T-cell (primary cell): ENCODE measurements at regions of chr2 and their contacts with region 1.

Region 1: DNA sequence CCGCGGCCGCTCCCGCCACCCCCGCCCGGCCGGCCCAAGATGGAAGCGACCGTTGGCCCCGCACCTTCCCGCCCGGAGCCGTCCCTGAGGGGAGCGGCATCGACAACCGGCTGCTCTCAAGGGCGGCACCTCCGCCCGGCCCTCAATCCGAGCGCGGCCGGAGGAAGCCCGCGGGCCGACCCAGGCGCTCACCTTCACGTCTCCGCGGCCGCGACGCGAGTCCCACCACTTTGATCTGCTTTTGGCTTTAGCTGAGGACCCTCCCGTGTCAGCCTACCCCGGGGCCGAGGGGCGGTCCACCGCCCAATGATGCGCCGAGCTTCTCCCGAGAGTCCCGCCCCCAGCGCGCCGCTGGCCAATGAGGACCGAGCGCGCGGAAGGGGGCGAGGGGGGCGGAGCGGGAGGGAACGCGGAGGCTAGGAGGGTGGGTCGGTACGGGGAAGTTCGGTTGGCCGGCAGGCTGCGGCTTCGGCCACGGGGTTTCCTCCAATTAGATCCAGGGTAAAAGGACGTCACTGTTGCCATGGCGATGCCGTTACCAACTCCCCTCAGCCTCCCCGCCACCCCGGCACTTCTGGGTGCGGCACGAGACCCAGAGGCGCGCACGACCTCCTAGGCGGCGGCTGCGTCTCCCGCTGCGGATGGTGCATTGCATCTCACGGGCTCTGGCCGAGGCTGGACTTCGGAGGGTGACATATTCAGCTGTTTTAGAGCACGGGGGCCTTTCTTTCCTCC is at the start of gene YWHAQ:
- DNase-seq: peak; percentile 90 to 99 (median 95)
- ATAC-seq: peak; percentile 88 to 92 (median 89)
- H3K4me3 ChIP-seq: peak within 1 kb of the TSS; percentile 84 to 87
- H3K4me3 Mint-ChIP-seq: peak within 1 kb of the TSS; percentile 91 to 95 (median 92)
- H3K27ac ChIP-seq: peak within 1 kb of the TSS; percentile 82
- H3K27ac Mint-ChIP-seq: peak within 1 kb of the TSS; percentile 88 to 91
- H3K4me1 ChIP-seq: peaks cover 12 to 29% of the 10 kb centered on the region in 2 experiments
- H3K4me1 Mint-ChIP-seq: peaks cover 53 to 54% (median 53%) of the 10 kb centered on the region in 3 donors
- H3K27me3 ChIP-seq: no peaks in the 10 kb centered on the region
- H3K27me3 Mint-ChIP-seq: no peaks in the 10 kb centered on the region
- total RNA-seq, gene YWHAQ: 104 to 141 (median 139) TPM

Region 2: DNA sequence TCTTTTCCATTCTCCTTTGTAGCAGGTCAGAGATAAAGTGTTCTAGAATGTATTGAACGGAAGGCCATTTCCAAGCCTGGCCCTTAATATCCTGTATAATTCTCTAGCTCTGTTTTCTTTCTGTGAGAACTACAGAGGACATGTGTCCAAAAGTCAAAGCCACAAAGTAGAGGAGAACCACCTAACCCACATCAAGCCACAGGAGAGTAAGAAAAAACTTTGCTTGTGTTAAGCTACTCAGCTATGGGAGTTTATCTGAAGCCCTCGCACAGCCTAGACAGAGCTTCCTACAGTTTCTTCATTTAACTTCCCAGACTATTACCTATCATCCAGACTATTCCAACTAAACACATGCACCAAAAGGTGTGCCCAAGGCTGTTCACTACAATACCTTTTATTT is 97.3 kb before region 1 on chr2:
- CTCF ChIA-PET with region 1: no interaction called
- POLR2A ChIA-PET with region 1: interaction called in 1 of 2 experiments, 20 read pairs
- DNase-seq: no peak
- ATAC-seq: no peak
- H3K4me3 ChIP-seq: no peak overlapping the region
- H3K4me3 Mint-ChIP-seq: no peak overlapping the region
- H3K27ac ChIP-seq: no peak overlapping the region
- H3K27ac Mint-ChIP-seq: no peak overlapping the region
- H3K4me1 ChIP-seq: no peaks in the 10 kb centered on the region
- H3K4me1 Mint-ChIP-seq: peaks cover 0 to 20% (median 17%) of the 10 kb centered on the region in 3 donors
- H3K27me3 ChIP-seq: no peaks in the 10 kb centered on the region
- H3K27me3 Mint-ChIP-seq: no peaks in the 10 kb centered on the region

Region 3: DNA sequence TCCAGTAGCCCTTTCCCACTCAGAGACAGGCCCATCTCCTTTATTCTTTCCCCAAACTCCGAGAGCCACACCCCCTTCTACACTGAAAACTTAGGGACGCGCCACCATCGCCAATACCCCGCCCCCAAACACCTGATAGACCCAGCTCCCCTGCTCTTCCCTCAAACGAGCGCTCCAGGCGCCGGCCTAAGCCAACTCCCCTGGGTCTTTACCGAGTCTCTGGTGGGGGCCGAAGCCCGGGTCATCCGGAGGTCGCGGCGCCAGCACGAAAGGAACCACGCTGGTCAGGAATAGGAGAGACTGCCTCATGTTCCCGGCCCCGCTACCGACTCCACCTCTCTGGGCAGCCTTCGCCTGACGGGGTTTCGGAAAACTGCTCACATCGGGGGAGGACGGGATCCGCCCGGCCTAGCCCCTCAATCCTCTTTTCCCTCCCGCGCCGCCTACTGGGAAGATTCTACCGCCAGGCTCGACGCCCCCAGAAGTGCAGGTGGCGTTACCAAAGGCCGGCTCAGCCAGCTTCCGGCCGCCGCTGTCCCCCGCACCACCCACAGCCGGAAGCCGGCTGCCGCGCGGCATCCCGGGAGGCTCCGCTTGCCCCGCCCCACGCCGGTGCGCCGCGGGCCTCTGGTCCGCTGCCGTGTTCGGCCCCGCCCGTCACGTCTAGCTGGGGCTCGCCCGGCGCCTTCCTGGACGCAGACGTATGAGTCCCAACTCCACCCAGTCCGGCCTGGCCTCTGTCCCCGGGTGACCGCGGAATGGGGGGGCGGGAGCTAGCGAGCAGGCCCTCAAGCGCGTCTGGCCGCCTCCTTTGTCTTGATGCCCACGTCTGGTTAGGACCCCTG is 75.4 kb before region 1 on chr2 and contains the start of gene ADAM17:
- CTCF ChIA-PET with region 1: interaction called in 1 of 2 experiments, 6 read pairs
- POLR2A ChIA-PET with region 1: interaction called in 1 of 2 experiments, 17 read pairs
- DNase-seq: peak; percentile 56 to 91 (median 74)
- ATAC-seq: peak; percentile 94 to 97 (median 96)
- H3K4me3 ChIP-seq: peak within 1 kb of the TSS; percentile 95 to 99
- H3K4me3 Mint-ChIP-seq: peak within 1 kb of the TSS; percentile 95 to 97 (median 95)
- H3K27ac ChIP-seq: peak within 1 kb of the TSS; percentile 94
- H3K27ac Mint-ChIP-seq: peak within 1 kb of the TSS; percentile 93 to 94
- H3K4me1 ChIP-seq: peaks cover 20 to 33% of the 10 kb centered on the region in 2 experiments
- H3K4me1 Mint-ChIP-seq: peaks cover 52 to 60% (median 53%) of the 10 kb centered on the region in 3 donors
- H3K27me3 ChIP-seq: no peaks in the 10 kb centered on the region
- H3K27me3 Mint-ChIP-seq: no peaks in the 10 kb centered on the region
- total RNA-seq, gene ADAM17: 26.5 to 34.5 (median 29.5) TPM

Region 4: DNA sequence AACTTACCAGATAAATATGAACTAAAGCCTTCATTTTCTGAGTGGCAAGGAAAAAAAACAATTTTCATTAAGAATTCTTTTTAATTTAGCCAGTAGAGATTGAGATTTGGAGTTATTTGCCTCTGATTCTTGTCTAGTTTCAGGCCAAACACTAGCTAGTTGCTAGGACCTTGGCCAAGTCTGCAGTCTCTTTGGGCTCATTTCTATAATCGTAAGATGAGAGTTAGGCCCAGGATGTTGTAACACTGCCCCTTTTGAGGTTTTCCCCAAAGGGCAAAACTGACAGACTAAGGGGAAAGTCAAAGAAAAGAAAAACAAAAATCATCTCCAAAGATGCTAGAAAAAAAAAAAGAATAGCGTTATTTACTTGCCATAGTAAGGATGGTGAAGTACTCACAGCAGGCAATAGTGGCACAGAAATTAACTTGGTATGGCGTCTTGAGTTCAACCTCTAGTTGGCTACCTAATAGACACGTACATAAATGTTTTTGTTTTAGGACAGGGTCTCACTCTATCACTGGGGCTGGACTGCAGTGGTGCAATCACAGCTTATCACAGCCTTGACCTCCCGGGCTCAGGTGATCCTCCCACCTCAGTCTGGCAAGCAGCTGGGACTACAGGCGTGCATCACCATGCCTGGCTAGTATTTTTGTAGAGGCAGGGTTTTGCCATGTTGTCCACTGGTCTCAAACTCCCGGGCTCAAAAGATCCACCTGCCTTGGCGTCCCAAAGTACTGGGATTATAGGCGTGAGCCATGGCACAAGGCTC is 52.3 kb before region 1 on chr2:
- CTCF ChIA-PET with region 1: no interaction called
- POLR2A ChIA-PET with region 1: interaction called, 6 to 12 read pairs
- DNase-seq: no peak
- ATAC-seq: no peak
- H3K4me3 ChIP-seq: no peak overlapping the region
- H3K4me3 Mint-ChIP-seq: no peak overlapping the region
- H3K27ac ChIP-seq: no peak overlapping the region
- H3K27ac Mint-ChIP-seq: no peak overlapping the region
- H3K4me1 ChIP-seq: no peaks in the 10 kb centered on the region
- H3K4me1 Mint-ChIP-seq: peaks cover 0 to 3% (median 0%) of the 10 kb centered on the region in 3 donors
- H3K27me3 ChIP-seq: no peaks in the 10 kb centered on the region
- H3K27me3 Mint-ChIP-seq: no peaks in the 10 kb centered on the region

Region 5: DNA sequence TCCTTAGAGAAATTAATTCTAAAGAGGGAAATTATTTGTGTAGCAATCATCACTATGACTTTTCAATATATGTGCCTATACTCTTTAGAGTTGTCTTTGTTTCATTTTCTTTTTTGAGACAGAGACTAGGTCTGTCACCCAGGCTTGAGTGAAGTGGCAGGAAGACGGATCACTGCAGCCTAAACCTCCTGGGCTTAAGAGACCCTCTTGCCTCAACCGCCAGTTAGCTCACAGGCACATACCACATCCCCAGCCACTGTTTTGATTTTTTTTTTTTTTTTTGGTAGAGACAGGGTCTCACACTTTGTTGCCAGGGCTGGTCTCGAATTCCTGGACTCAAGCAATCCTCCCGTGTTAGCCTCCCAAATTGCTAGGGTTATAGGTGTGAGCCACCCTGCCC is 12.5 kb before region 1 on chr2:
- CTCF ChIA-PET with region 1: interaction called in 1 of 2 experiments, 3 read pairs
- POLR2A ChIA-PET with region 1: interaction called, 6 to 52 read pairs
- DNase-seq: peak in 27 of 35 experiments; percentile 12 to 62 (median 31)
- ATAC-seq: peak; percentile 86 to 91 (median 90)
- H3K4me3 ChIP-seq: no peak overlapping the region
- H3K4me3 Mint-ChIP-seq: peak overlapping the region; percentile 30 to 72 (median 65)
- H3K27ac ChIP-seq: peak overlapping the region; percentile 50
- H3K27ac Mint-ChIP-seq: peak overlapping the region; percentile 87 to 89
- H3K4me1 ChIP-seq: peaks cover 9% of the 10 kb centered on the region in 2 experiments
- H3K4me1 Mint-ChIP-seq: peaks cover 86 to 94% (median 93%) of the 10 kb centered on the region in 3 donors
- H3K27me3 ChIP-seq: no peaks in the 10 kb centered on the region
- H3K27me3 Mint-ChIP-seq: no peaks in the 10 kb centered on the region

Region 6: DNA sequence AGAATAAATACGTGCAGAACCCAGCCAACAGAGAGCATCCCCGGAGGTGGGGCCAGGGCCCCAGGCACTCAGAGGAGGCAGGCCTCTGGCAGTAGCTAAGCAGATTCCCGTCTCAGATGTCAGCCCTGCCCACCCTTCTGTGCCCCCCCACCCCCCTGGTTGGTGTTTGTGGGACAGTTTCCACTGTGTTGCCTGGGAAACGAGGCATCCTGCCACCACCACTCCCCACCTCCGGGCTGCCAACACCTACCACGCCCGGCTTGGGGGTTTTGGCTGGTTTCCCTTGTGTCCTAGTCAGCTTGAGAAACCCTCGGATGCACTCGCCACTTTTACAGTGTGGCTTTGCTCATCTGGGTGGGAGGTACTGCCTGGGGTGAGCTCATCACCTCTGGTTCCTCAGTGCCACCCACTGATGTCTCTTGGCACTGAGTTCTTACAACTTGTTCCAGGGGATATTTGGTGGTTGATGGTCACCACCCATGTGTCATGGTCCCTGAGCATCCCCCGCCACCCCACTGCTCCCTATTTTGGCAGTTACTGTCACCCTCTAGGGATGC is 72.2 kb after region 1 on chr2:
- CTCF ChIA-PET with region 1: interaction called in 1 of 2 experiments, 8 read pairs
- POLR2A ChIA-PET with region 1: interaction called, 3 to 39 read pairs
- DNase-seq: peak; percentile 52 to 96 (median 89)
- ATAC-seq: peak; percentile 84 to 93 (median 88)
- H3K4me3 ChIP-seq: no peak overlapping the region
- H3K4me3 Mint-ChIP-seq: peak overlapping the region in 1 of 3 donors; percentile 50
- H3K27ac ChIP-seq: peak overlapping the region; percentile 94
- H3K27ac Mint-ChIP-seq: peak overlapping the region; percentile 76 to 87
- H3K4me1 ChIP-seq: peaks cover 0 to 43% of the 10 kb centered on the region in 2 experiments
- H3K4me1 Mint-ChIP-seq: peaks cover 16 to 53% (median 34%) of the 10 kb centered on the region in 3 donors
- H3K27me3 ChIP-seq: no peaks in the 10 kb centered on the region
- H3K27me3 Mint-ChIP-seq: no peaks in the 10 kb centered on the region